ENCODE measurements at regions of chr2 and their contacts with region 1.

Region 1: DNA sequence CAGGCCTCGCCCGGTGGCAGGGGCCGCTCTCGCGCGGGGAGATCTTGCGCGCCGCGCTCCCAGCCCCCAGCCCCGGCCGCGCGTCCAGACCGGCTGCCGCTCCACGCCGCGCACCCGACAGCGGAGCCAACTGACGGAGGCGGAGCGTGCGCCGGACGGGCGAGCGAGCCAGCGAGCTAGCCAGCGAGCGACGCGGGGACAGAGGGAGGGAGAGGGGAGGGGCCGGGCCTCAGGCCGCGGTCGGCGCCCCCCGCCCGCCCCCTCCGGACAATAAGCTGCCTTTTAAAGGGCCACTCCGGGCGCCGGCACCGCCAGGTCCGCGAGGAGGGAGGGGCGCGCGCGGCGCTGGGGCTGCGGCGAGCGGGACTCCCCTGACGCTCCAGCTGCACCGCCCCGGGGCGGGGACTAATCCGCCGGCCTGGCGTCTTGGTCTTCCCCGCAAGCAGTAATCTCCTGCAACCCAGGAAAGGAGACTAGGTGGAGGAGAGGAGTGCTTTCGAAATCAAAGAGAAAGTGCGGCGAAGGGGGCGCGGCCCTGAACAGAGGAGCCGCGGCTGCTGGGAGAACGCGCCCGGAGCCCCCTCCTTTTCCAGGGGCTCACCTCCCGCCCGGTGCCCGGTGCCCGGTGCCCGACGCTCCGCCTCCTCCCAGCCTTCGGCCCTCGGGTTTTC is at the start of gene BIN1:
- DNase-seq: peak; percentile 95
- H3K4me3 Mint-ChIP-seq: peak within 1 kb of the TSS; percentile 84
- H3K27ac Mint-ChIP-seq: no peak within 1 kb of the TSS
- H3K4me1 Mint-ChIP-seq: peaks cover 6% of the 10 kb centered on the region
- H3K27me3 Mint-ChIP-seq: peaks cover 31% of the 10 kb centered on the region
- total RNA-seq, gene BIN1: 38.3 and 39.7 TPM in 2 replicates

Region 2: DNA sequence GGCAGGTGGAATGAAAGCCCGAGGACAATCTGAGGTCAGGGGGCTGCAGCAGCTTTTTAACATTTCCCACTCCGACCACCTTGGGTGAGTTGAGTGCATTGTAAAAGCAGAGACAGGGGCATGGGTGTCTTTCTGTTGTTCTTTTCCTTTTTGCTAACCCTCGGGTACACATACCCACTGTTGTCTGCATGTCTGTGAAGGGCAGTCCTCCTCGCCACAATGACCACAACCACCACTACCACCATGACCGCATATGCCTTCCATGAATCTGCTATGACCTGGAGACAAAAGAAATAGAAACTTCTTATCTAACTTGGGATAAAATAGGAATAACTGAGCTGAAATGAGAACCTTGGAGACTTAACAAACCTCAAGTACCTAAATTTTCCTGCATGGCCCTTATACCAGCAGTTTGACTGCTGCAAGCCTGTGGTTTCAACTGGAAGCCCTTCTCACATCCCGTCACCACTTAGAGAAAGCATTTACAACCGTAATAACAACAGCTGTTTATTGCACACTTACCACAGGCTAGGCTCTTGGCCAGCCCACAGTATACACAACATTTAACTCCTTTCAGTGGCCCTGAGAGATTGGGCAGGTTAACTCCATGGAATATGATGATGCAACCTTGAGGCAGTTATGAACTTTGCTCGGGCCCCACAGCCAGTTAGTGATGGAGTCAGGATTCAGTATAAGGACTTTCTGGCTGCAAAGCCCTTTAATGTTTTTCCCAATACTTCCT is 370.8 kb before region 1 on chr2:
- intact Hi-C with region 1: no loop called
- DNase-seq: no peak
- H3K4me3 Mint-ChIP-seq: no peak overlapping the region
- H3K27ac Mint-ChIP-seq: no peak overlapping the region
- H3K4me1 Mint-ChIP-seq: no peaks in the 10 kb centered on the region
- H3K27me3 Mint-ChIP-seq: peaks cover 3% of the 10 kb centered on the region

Region 3: DNA sequence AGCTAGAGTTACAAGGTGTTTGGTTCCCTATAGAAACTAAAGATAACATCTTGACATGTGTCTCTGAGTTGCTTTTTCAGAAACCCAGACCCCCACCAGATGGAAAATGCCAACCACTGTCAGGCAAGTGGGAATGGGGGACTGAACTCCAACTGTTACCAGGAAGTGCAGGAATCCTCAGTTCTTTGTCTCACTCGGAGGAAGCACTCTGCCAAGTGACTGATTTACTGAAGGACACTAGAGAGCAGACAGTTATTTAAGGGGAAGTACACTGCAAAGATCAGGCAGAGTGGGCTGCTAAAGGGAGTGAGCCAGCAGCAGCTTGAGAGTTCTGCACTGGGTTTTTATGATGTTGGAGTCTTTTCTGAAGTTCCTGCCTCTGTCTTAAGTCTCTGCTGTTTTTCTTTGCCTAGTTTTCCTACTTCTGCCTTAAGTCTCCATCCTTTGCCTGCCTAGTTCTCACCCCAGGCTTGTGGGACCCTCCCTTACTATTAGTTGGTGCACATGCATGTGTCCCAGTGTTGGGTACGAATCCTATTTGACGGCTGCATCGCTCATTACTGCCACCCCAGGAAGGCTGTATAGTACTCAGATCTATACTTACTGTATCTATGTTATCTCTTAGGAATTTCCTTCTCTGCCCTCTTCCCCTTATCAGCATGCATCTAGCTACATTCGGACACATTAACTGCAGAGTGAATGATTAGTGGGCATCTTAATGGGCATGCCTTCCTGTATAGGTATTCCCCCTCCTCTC is 111.3 kb before region 1 on chr2:
- intact Hi-C with region 1: no loop called
- DNase-seq: no peak
- H3K4me3 Mint-ChIP-seq: no peak overlapping the region
- H3K27ac Mint-ChIP-seq: no peak overlapping the region
- H3K4me1 Mint-ChIP-seq: no peaks in the 10 kb centered on the region
- H3K27me3 Mint-ChIP-seq: peaks cover 4% of the 10 kb centered on the region

Region 4: DNA sequence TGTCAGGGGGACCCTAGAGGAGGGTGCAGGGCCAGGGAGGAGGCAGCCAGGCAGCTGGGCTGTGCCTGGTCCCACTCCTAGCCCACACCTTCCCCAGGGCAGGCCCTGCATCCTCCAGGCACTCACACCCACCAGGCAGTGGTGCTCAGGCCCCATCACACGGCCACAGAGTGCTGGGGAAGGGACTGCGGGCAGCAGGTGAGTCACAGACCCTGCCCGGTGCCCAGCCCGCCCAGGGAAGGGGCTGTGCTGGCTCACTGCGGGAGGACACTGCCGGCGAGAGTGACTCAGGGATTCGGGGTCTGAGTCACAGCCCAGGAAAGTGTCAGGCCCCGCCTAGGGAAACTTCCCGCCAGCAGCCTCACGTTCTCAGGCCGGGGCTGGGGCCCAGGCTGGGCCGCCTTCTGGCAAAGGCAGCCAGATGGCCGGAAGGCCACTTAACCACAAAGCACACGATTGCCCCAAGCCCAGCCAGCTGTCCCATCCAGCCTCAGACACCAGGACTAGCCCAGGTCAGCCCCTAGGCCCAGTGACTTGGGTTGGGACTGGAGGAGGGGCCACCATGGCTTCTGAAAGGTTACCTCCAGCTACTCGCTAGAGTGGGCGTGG is 42.3 kb before region 1 on chr2:
- intact Hi-C with region 1: loop called (anchors 1 kb)
- DNase-seq: peak; percentile 86
- H3K4me3 Mint-ChIP-seq: no peak overlapping the region
- H3K27ac Mint-ChIP-seq: peak overlapping the region; percentile 84
- H3K4me1 Mint-ChIP-seq: peaks cover 18% of the 10 kb centered on the region
- H3K27me3 Mint-ChIP-seq: no peaks in the 10 kb centered on the region